ENCODE measurements at regions of chr15 and their contacts with region 1.

Region 1: GRCh38 chr15:75639709-75640482 is at the start of gene IMP3:
- DNase-seq: peak; percentile 97 to 99 (median 98)
- ATAC-seq: peak; percentile 94
- H3K4me3 ChIP-seq: peak within 1 kb of the TSS; percentile 93
- H3K27ac ChIP-seq: peak within 1 kb of the TSS; percentile 86
- H3K4me1 ChIP-seq: peaks cover 18 to 34% of the 10 kb centered on the region in 2 experiments
- H3K27me3 ChIP-seq: no peaks in the 10 kb centered on the region; a peak in 1 of 5 replicates
- CTCF ChIP-seq: no peak
- EP300 ChIP-seq: no peak
- POLR2A ChIP-seq: peak; percentile 98
- RAD21 ChIP-seq: no peak
- polyA plus RNA-seq, gene IMP3: 14.5 to 15.5 TPM

Region 2: DNA sequence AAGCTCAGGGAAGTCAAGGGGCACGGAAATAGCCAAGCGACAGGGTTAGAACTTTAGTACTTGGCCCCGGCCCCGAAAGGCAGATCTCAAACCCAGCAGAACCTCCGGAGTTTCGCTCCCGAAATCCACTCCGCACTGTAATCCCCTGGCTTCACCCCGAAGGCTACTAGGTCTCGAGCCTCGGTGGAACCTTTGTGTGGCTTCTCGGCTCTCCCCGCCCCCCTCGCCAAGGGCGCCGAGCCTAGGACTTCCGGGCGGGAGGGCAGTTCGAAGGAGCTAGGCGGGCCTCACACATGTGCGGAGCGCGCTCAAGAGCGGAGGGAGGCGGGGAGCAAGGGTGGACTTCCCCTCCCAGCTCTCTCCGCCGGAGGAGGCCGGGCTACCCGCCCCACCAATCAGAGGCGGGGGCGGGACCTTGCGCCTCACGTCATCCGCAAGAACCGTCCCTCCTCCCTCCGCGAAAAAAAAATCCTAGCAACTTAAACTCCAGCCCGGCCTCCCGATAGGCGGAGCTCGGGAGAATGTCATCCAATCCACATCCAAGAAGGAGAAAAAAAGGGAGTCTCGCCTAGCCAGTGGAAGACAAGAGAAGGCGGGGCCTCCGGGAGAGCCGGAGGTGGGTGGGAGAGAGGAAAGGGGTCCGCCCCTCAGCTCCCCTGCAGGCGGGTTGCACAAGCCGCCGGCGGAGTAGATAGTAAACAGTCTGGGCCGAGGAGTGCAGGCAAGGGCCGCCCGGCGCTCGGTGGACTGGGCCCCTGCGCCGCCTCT is 186.0 kb before region 1 on chr15:
- CTCF ChIA-PET with region 1: no interaction called
- POLR2A ChIA-PET with region 1: interaction called, 7 read pairs
- in situ Hi-C with region 1: no loop called
- intact Hi-C with region 1: loop called (anchors 2 kb)
- DNase-seq: peak; percentile 88 to 99 (median 92)
- ATAC-seq: peak; percentile 64
- H3K4me3 ChIP-seq: peak overlapping the region; percentile 86
- H3K27ac ChIP-seq: peak overlapping the region; percentile 97
- H3K4me1 ChIP-seq: peaks cover 13 to 33% of the 10 kb centered on the region in 2 experiments; a peak in 3 of 5 replicates
- H3K27me3 ChIP-seq: no peaks in the 10 kb centered on the region
- CTCF ChIP-seq: peak in 1 of 3 experiments; percentile 11; a peak in 1 of 6 replicates
- EP300 ChIP-seq: no peak
- POLR2A ChIP-seq: peak; percentile 87
- RAD21 ChIP-seq: no peak

Region 3: GRCh38 chr15:75508840-75509532 is 130.9 kb before region 1 on chr15:
- CTCF ChIA-PET with region 1: interaction called, 3 read pairs
- POLR2A ChIA-PET with region 1: interaction called, 5 read pairs
- in situ Hi-C with region 1: no loop called
- intact Hi-C with region 1: loop called (anchors 1 kb)
- DNase-seq: peak; percentile 26 to 62 (median 36)
- ATAC-seq: peak; percentile 85
- H3K4me3 ChIP-seq: no peak overlapping the region
- H3K27ac ChIP-seq: no peak overlapping the region
- H3K4me1 ChIP-seq: no peaks in the 10 kb centered on the region
- H3K27me3 ChIP-seq: no peaks in the 10 kb centered on the region
- CTCF ChIP-seq: peak; percentile 55 to 78 (median 67); a peak in 5 of 6 replicates
- EP300 ChIP-seq: no peak
- POLR2A ChIP-seq: no peak
- RAD21 ChIP-seq: peak; percentile 62 to 74

Region 4: GRCh38 chr15:75597667-75598341 is 42.1 kb before region 1 on chr15:
- CTCF ChIA-PET with region 1: no interaction called
- POLR2A ChIA-PET with region 1: no interaction called
- in situ Hi-C with region 1: no loop called
- intact Hi-C with region 1: loop called (anchors 5 kb)
- DNase-seq: peak in 2 of 4 experiments; percentile 49 to 61
- ATAC-seq: peak; percentile 78
- H3K4me3 ChIP-seq: no peak overlapping the region
- H3K27ac ChIP-seq: no peak overlapping the region
- H3K4me1 ChIP-seq: peaks cover 4 to 15% of the 10 kb centered on the region in 2 experiments; a peak in 3 of 5 replicates
- H3K27me3 ChIP-seq: no peaks in the 10 kb centered on the region
- CTCF ChIP-seq: peak; percentile 47 to 60 (median 60); a peak in 5 of 6 replicates
- EP300 ChIP-seq: 0 out of 2 replicates have a peak, but pooled peaks have one; percentile 17
- POLR2A ChIP-seq: no peak
- RAD21 ChIP-seq: peak; percentile 32 to 54; a peak in 3 of 4 replicates

Region 5: GRCh38 chr15:75625542-75626347 is 14.2 kb before region 1 on chr15 and contains the start of gene SNUPN:
- CTCF ChIA-PET with region 1: interaction called, 3 read pairs
- POLR2A ChIA-PET with region 1: interaction called, 60 read pairs
- in situ Hi-C with region 1: no loop called
- intact Hi-C with region 1: loop called (anchors 1 kb)
- DNase-seq: peak; percentile 95 to 99 (median 96)
- ATAC-seq: peak; percentile 91
- H3K4me3 ChIP-seq: peak within 1 kb of the TSS; percentile 99
- H3K27ac ChIP-seq: peak within 1 kb of the TSS; percentile 91
- H3K4me1 ChIP-seq: peaks cover 20 to 23% of the 10 kb centered on the region in 2 experiments
- H3K27me3 ChIP-seq: no peaks in the 10 kb centered on the region
- CTCF ChIP-seq: no peak
- EP300 ChIP-seq: peak; percentile 77; the same call in 1 of the 2 replicates
- POLR2A ChIP-seq: peak; percentile 92
- RAD21 ChIP-seq: no peak
- polyA plus RNA-seq, gene SNUPN: 69.3 to 78.3 TPM

Measured in K562 (cell line).